Right ventricle myocardium inferior (tissue), 1 donor: ENCODE measurements at regions of chr2 and their contacts with region 1.

Region 1: DNA sequence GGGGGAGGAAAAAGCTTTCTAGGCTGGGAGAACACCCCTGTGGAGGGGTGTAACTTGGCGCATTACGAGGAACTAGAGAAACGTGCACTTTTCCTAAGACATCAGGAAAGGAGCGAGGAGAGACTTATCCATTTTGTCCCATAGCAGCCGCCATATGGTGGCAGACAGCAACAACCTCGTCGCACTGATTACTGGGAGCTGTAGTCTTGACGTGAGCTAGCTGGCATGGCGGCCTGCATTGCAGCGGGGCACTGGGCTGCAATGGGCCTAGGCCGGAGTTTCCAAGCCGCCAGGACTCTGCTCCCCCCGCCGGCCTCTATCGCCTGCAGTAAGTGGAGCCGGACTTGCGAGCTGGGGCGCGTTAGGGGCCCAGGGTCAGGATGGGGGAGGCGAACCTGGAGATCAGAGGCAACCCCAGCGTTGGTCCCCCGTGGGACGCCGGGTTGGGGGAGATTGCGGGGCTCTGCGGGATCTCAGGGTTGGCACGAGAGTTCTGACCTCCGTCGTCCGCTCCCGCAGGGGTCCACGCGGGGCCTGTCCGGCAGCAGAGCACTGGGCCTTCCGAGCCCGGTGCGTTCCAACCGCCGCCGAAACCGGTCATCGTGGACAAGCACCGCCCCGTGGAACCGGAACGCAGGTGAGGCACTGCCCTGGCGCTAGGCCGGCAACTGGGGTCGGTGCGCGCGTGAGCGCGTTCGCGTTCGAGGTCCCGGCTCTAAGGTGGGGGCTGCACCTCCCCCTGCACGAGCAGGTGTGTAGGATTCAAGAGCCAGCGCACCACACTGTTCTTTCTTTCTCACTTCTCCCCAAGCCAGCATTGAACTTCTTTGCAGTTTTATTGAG is at the start of gene MRPL19:
- DNase-seq: peak; percentile 89
- ATAC-seq: peak; percentile 98
- total RNA-seq, gene MRPL19: 53.9 TPM

Region 2: GRCh38 chr2:75527676-75528598 is 118.9 kb before region 1 on chr2:
- intact Hi-C with region 1: no loop called
- DNase-seq: no peak
- ATAC-seq: no peak

Region 3: DNA sequence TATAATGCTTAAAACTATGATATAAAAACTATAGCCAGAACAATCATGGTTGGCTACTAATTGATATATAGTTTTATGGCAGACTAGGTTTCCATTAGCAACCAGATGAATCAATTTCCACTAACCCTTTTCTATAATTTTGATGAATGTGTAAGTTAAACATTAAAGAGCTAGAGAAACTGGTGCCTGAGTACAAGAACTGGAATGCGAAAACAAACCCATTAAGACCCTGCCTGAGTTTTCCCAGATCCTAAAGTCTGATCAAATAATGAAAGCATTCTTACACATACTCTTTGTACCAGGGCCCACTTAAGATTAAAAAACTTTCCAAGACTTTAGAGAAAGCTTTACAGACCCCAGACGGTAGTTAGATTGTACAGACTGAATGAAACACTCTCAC is 21.1 kb after region 1 on chr2:
- intact Hi-C with region 1: loop called (anchors 2 kb)
- DNase-seq: no peak
- ATAC-seq: no peak

Region 4: DNA sequence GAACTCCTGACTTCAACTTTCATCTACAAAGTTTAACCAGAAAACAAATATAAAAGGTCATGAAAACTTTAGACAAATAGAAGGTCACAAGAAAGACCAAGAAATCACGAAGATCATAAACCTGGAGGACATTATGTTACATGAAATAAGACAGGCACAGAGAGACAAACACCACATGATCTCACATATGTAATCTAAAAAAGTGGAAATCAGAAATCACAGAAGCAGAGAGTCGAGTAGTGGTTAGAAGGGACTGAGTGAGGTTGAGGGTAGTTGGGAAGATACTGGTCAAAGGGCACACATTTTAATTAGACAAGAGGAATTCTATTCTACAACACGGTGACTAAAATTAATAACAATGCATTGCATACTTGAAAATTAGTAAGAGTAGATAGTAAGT is 62.5 kb after region 1 on chr2:
- intact Hi-C with region 1: loop called (anchors 5 kb)
- DNase-seq: no peak
- ATAC-seq: no peak